Heart right ventricle (tissue), 16 donors: ENCODE measurements at regions of chr4 and their contacts with region 1.

Region 1: DNA sequence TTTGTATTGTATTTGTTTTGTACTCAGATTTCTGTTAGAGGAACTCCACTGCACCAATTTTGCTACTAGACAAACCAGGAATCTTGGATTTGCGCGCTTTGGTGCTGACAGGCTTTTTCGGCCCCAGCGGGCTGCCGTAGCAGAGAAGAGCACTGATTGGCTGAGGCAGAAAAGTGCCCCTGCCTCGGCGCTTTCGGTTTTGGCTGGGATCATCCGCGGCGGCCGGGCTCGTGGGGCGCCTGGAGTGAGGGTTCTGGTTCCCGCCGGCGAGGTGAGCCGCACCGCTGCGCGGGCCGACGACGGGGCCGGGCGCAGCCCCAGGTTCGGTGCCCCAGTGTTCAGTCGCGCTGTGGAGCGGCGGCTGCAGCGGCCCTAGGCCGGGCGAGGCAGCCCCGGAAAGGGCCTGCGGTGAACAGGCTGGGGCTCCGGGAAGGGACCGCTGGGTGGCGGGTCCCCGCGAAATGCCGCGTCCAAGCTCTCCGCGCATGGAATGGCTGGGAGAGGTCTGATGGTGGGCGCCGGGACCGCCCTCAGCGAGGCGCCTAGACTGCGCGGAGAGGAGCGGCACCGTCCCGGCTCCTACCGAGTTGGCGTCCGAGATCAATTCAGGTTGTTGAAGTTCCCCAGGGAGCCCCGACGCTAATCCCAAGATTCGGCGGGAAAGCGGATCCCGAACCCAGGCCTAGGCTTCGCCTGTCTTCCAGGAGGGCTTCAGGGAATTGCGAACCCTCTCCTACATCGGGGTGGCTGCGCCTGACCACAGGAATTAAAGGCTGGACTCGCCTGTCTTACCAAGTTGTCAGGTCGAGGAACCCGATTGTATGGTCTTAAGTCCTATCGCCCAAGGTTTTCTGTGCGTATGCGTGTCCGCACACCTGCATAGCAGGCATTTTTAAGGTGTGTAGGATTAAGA is at the start of gene LSM6:
- DNase-seq: peak; percentile 87 to 91
- ATAC-seq: peak; percentile 96 to 99 (median 98)
- H3K4me3 ChIP-seq: peak within 1 kb of the TSS; percentile 74 to 97 (median 94)
- H3K27ac ChIP-seq: peak within 1 kb of the TSS; percentile 80 to 97 (median 95)
- H3K4me1 ChIP-seq: peaks cover 8 to 50% (median 42%) of the 10 kb centered on the region in 9 donors
- H3K27me3 ChIP-seq: no peaks in the 10 kb centered on the region
- CTCF ChIP-seq: peak in 5 of 9 donors; percentile 17 to 48 (median 35)
- total RNA-seq, gene LSM6: 8.7 to 18.0 (median 11.8) TPM

Region 2: GRCh38 chr4:145936142-145936996 is 239.4 kb before region 1 on chr4:
- intact Hi-C with region 1: loop called in 2 of 10 experiments (anchors 10 kb)
- DNase-seq: peak; percentile 70 to 76
- ATAC-seq: peak; percentile 65 to 87 (median 73)
- H3K4me3 ChIP-seq: peak overlapping the region; percentile 68 to 88 (median 82)
- H3K27ac ChIP-seq: peak overlapping the region; percentile 84 to 98 (median 96)
- H3K4me1 ChIP-seq: peaks cover 0 to 31% (median 12%) of the 10 kb centered on the region in 9 donors
- H3K27me3 ChIP-seq: peaks cover 0 to 17% (median 0%) of the 10 kb centered on the region in 7 donors
- CTCF ChIP-seq: peak in 4 of 9 donors; percentile 19 to 35 (median 26)

Region 3: GRCh38 chr4:145956288-145956890 is 219.4 kb before region 1 on chr4:
- intact Hi-C with region 1: loop called in 1 of 10 experiments (anchors 10 kb)
- DNase-seq: peak in 1 of 2 donors; percentile 23
- ATAC-seq: peak in 2 of 8 donors; percentile 37 to 38
- H3K4me3 ChIP-seq: no peak overlapping the region
- H3K27ac ChIP-seq: no peak overlapping the region
- H3K4me1 ChIP-seq: no peaks in the 10 kb centered on the region
- H3K27me3 ChIP-seq: no peaks in the 10 kb centered on the region
- CTCF ChIP-seq: peak; percentile 53 to 82 (median 75)

Region 4: DNA sequence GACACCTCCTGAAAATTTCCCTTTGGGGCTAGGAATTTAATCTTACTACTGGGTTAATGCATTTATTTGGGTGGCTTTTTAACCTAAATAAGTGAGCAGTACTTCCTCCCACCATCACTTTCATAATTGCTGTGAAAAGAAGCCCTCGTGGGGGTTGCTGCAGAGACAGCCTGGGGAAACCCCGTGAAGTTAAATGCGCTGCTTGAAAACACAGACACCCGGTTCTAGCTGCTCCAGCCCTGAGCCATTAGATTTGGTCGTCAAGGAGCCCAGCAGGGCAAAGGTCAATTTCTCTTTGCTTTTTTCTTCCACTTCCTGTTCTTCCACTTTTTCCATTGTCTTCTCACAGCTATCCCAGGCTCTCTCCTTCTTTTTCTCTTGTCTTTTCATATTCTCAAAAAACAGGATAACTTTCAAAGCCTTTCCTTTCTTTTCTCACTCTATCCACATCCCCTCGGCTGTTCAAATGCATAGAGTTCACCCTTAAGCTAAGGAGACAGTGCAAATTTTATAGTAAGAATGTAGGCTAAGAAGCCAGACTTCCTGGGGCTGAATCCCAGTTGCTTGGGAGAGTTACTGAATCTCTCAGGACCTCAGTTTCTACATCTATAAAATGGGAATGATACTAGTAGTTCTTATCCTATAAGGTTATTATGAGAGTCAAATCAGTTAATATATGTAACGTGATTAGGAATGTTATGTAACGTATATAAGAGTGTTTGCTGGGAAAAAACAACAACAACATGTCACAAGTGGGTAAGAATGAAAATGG is 145.7 kb before region 1 on chr4:
- intact Hi-C with region 1: no loop called
- DNase-seq: no peak
- ATAC-seq: no peak
- H3K4me3 ChIP-seq: no peak overlapping the region
- H3K27ac ChIP-seq: no peak overlapping the region
- H3K4me1 ChIP-seq: no peaks in the 10 kb centered on the region
- H3K27me3 ChIP-seq: peaks cover 0 to 13% (median 0%) of the 10 kb centered on the region in 7 donors
- CTCF ChIP-seq: no peak

Region 5: DNA sequence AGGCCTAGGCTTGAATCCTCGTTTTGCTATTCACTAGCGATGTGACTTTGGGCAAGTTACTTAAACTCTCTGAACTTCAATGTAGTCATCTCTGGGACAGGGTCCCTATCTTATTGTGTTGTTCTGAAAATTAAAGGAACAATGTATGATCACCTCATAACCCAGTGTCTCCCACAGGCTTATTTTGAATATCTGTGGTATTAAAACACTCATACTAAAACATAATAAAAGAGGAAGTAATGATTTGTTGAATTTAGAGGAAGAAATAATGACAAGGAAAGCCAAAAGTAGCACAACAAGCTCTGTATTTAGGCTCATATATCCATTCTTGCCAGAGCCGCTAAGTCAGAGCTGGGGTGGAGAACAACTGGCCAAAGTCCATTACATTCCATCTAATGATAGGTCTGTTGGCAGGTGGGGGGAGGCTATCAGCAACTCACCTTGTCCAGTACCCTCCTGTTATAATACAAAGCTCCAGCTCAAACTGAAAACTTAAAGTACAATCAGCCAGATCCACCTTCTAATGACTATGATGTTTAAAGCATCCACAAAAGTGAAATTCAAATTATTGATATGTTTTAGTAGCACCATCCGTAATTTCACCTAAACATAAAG is 64.8 kb before region 1 on chr4:
- intact Hi-C with region 1: loop called in 1 of 10 experiments (anchors 10 kb)
- DNase-seq: no peak
- ATAC-seq: peak in 1 of 8 donors; percentile 4
- H3K4me3 ChIP-seq: no peak overlapping the region
- H3K27ac ChIP-seq: peak overlapping the region in 1 of 10 donors; percentile 18
- H3K4me1 ChIP-seq: peaks cover 0 to 11% (median 0%) of the 10 kb centered on the region in 9 donors
- H3K27me3 ChIP-seq: no peaks in the 10 kb centered on the region
- CTCF ChIP-seq: no peak

Region 6: DNA sequence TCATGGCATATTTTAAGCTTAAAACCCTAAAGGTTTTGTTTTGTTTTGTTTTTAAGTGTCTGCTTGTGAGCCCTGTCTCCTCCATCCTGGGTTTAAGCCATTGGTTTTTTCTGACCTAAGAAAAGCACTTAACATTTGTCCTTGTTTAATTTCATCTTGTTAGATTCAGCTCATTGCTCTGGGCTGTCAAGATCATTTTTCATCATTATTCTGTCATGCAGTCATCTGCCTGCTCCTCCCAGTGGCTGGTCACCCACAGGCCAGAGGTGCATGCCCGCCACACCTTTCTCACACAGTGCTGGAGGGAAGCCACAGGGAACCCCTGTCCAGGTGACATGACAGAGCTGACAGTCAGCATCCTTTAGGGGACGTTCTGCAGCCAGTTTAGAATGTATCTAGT is 26.9 kb after region 1 on chr4:
- intact Hi-C with region 1: no loop called
- DNase-seq: no peak
- ATAC-seq: no peak
- H3K4me3 ChIP-seq: no peak overlapping the region
- H3K27ac ChIP-seq: no peak overlapping the region
- H3K4me1 ChIP-seq: no peaks in the 10 kb centered on the region
- H3K27me3 ChIP-seq: no peaks in the 10 kb centered on the region
- CTCF ChIP-seq: no peak

Region 7: GRCh38 chr4:146333187-146333894 is 157.5 kb after region 1 on chr4:
- intact Hi-C with region 1: loop called in 1 of 10 experiments (anchors 10 kb)
- DNase-seq: no peak
- ATAC-seq: no peak
- H3K4me3 ChIP-seq: no peak overlapping the region
- H3K27ac ChIP-seq: no peak overlapping the region
- H3K4me1 ChIP-seq: peaks cover 0 to 49% (median 3%) of the 10 kb centered on the region in 9 donors
- H3K27me3 ChIP-seq: no peaks in the 10 kb centered on the region
- CTCF ChIP-seq: no peak

Region 8: GRCh38 chr4:146522098-146522868 is 346.5 kb after region 1 on chr4:
- intact Hi-C with region 1: loop called in 1 of 10 experiments (anchors 10 kb)
- DNase-seq: peak; percentile 89 to 94
- ATAC-seq: peak; percentile 98 to 99 (median 99)
- H3K4me3 ChIP-seq: peak overlapping the region; percentile 55 to 100 (median 76)
- H3K27ac ChIP-seq: peak overlapping the region; percentile 27 to 96 (median 84)
- H3K4me1 ChIP-seq: peaks cover 0 to 27% (median 21%) of the 10 kb centered on the region in 9 donors
- H3K27me3 ChIP-seq: no peaks in the 10 kb centered on the region
- CTCF ChIP-seq: no peak